WTC11 (cell line): ENCODE measurements at regions of chr1 and their contacts with region 1.

Region 1: GRCh38 chr1:56803561-56804156 is 15.5 kb downstream of the FYB2 start:
- DNase-seq: peak; percentile 71
- ATAC-seq: peak; percentile 98
- H3K4me3 Mint-ChIP-seq: no peak overlapping the region
- H3K27ac Mint-ChIP-seq: no peak overlapping the region
- H3K4me1 Mint-ChIP-seq: no peaks in the 10 kb centered on the region
- H3K27me3 Mint-ChIP-seq: no peaks in the 10 kb centered on the region
- CTCF ChIP-seq: peak; percentile 36; the same call in 1 of the 2 replicates

Region 2: DNA sequence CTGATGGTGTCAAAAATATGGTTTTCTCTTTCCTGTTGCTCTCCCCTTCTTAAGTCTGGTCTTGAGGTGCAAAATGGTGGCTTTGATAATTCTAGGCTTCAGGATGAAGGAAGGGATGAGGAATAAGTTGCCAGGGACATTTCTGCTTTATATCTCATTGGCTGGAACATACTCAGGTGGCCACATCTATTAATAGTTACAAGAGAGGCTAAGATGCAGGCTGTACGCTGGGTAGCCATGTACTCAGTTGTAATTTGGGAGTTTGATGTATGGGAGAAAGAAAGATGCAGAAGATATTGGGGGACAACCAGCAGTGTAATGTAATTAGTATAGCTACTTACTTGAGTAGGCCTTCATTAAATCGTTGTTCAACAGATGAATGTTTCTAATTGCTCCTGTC is 133.3 kb before region 1 on chr1:
- CTCF ChIA-PET with region 1: no interaction called
- POLR2A ChIA-PET with region 1: no interaction called
- DNase-seq: no peak
- ATAC-seq: no peak
- H3K4me3 Mint-ChIP-seq: no peak overlapping the region
- H3K27ac Mint-ChIP-seq: no peak overlapping the region
- H3K4me1 Mint-ChIP-seq: peaks cover 12% of the 10 kb centered on the region
- H3K27me3 Mint-ChIP-seq: no peaks in the 10 kb centered on the region
- CTCF ChIP-seq: no peak

Region 3: DNA sequence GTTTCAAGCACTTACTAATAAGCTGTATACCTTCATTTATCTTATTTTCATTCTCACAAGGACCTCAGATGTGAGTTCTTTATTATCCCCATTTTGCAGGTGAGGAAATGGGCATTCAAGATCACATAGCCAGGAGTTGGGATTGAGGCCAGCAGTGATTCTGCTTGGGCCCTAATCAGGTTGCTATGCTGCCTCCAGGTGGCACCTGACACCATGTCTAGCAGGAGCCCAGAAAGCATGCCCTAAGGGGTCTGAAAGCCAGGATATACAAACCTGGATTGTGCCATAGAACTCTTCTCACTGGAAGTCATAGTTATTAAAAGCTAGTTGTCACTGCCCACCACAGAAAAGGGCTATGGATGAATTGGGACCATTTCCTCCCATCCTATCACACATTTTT is 45.5 kb before region 1 on chr1:
- CTCF ChIA-PET with region 1: interaction called, 14 read pairs
- POLR2A ChIA-PET with region 1: no interaction called
- DNase-seq: peak; percentile 45
- ATAC-seq: peak; percentile 98
- H3K4me3 Mint-ChIP-seq: no peak overlapping the region
- H3K27ac Mint-ChIP-seq: no peak overlapping the region
- H3K4me1 Mint-ChIP-seq: no peaks in the 10 kb centered on the region
- H3K27me3 Mint-ChIP-seq: no peaks in the 10 kb centered on the region
- CTCF ChIP-seq: no peak

Region 4: DNA sequence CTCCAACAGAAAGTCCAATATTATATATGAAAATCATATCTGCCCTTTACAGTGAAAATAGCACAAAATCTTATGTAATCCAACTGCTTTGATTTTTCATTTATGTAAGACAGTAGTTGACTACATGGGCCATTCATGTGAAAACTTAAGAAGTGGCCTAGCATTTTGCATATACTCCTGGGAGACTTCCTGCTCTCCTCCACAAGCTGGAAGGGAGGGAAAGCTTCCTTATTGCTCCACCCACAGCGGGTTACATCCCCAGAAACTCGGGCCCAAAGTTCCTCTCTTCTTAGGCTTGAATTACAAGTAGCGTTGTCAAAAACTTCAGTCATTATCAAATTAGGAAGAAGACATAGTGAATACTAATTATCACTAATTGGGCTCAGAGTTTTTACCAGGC is 13.6 kb before region 1 on chr1:
- CTCF ChIA-PET with region 1: interaction called, 17 read pairs
- POLR2A ChIA-PET with region 1: no interaction called
- DNase-seq: no peak
- ATAC-seq: peak; percentile 41; the same call in 1 of the 2 replicates
- H3K4me3 Mint-ChIP-seq: no peak overlapping the region
- H3K27ac Mint-ChIP-seq: no peak overlapping the region
- H3K4me1 Mint-ChIP-seq: peaks cover 10% of the 10 kb centered on the region
- H3K27me3 Mint-ChIP-seq: no peaks in the 10 kb centered on the region
- CTCF ChIP-seq: no peak